MCF 10A (cell line): ENCODE measurements at regions of chr12 and their contacts with region 1.

Region 1: DNA sequence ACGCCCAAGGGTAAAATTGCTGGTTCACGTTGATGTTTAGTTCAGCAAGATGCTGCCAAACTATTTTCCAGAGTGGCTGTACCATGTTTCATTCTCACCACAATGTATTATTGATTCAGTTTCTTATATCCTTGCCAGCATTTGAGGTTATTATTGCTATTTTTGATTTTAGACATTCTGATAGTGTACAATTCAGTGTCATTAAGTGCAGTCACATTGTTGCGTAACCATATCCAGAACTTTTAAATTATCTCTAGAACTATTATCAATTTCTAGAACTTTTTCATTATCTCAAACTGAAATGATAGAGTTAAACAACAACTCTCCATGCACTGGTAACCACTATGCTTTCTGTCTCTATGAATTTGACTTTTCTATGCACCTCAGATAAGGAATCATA is 10.7 kb upstream of the TBC1D15 start:
- DNase-seq: no peak
- H3K4me3 Mint-ChIP-seq: no peak overlapping the region
- H3K27ac Mint-ChIP-seq: no peak overlapping the region
- H3K4me1 Mint-ChIP-seq: no peaks in the 10 kb centered on the region
- H3K27me3 Mint-ChIP-seq: peaks cover 11% of the 10 kb centered on the region
- CTCF ChIP-seq: no peak

Region 2: GRCh38 chr12:71840231-71840847 is 11.5 kb after region 1 on chr12:
- CTCF ChIA-PET with region 1: no interaction called
- POLR2A ChIA-PET with region 1: interaction called, 17 read pairs
- intact Hi-C with region 1: no loop called
- DNase-seq: peak; percentile 76
- H3K4me3 Mint-ChIP-seq: peak overlapping the region; percentile 94
- H3K27ac Mint-ChIP-seq: peak overlapping the region; percentile 100
- H3K4me1 Mint-ChIP-seq: peaks cover 14% of the 10 kb centered on the region
- H3K27me3 Mint-ChIP-seq: no peaks in the 10 kb centered on the region
- CTCF ChIP-seq: no peak